Dendritic cell treated with granulocyte-macrophage colony-stimulating factor and Interleukin-4, amounts not matched to agents 40 ng/mL and 50 ng/mL, for 4 days (primary cell): ENCODE measurements at regions of chr12 and their contacts with region 1.

Region 1: DNA sequence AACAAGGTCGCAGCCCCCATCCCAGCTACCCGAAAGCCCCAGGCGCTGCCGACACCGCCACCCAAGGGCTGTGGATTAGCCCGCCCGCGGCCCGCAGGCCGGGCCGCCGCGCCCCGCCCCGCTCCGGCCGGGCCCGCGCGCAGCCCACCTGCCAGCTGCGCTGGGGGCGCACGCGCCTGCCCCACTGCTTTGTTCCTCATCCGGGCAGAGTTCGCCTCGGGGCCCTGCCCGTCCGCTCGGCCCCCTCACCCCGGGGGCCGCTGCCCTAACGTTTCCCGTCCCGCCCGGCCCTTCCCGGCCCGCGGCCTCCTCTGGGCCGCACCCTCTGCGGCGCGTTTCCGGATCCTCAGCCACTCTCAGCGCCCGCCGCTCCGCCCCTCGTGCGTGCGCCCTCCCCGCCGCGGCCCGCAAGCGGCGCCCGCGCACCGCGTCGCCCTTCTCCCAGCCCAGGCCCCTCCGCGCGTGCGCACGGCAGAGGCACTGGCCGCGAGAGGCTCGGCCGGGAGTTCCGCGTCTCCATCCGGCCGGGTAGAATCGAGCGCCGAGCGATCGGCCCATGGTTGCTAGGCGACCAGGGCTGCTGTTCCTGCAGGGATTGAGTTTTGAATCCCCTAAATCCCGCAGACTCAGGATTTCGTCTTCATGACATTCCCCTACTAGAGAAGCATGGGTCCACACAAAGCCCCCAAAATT is at the start of gene PRDM4:
- H3K4me3 Mint-ChIP-seq: peak within 1 kb of the TSS; percentile 88
- H3K27ac Mint-ChIP-seq: peak within 1 kb of the TSS; percentile 82
- H3K4me1 Mint-ChIP-seq: peaks cover 26% of the 10 kb centered on the region
- H3K27me3 Mint-ChIP-seq: peaks cover 8% of the 10 kb centered on the region

Region 2: GRCh38 chr12:107655281-107656065 is 105.5 kb before region 1 on chr12:
- intact Hi-C with region 1: no loop called
- H3K4me3 Mint-ChIP-seq: no peak overlapping the region
- H3K27ac Mint-ChIP-seq: no peak overlapping the region
- H3K4me1 Mint-ChIP-seq: peaks cover 10% of the 10 kb centered on the region
- H3K27me3 Mint-ChIP-seq: no peaks in the 10 kb centered on the region

Region 3: GRCh38 chr12:107685360-107686248 is 75.4 kb before region 1 on chr12 and contains the start of gene PWP1:
- intact Hi-C with region 1: loop called (anchors 5 kb)
- H3K4me3 Mint-ChIP-seq: peak within 1 kb of the TSS; percentile 94
- H3K27ac Mint-ChIP-seq: peak within 1 kb of the TSS; percentile 98
- H3K4me1 Mint-ChIP-seq: peaks cover 12% of the 10 kb centered on the region
- H3K27me3 Mint-ChIP-seq: no peaks in the 10 kb centered on the region

Region 4: GRCh38 chr12:107736914-107737313 is 24.0 kb before region 1 on chr12:
- intact Hi-C with region 1: no loop called
- H3K4me3 Mint-ChIP-seq: no peak overlapping the region
- H3K27ac Mint-ChIP-seq: no peak overlapping the region
- H3K4me1 Mint-ChIP-seq: peaks cover 21% of the 10 kb centered on the region
- H3K27me3 Mint-ChIP-seq: no peaks in the 10 kb centered on the region

Region 5: GRCh38 chr12:107779077-107779831 is 18.3 kb after region 1 on chr12:
- intact Hi-C with region 1: loop called (anchors 2 kb)
- H3K4me3 Mint-ChIP-seq: peak overlapping the region; percentile 71
- H3K27ac Mint-ChIP-seq: peak overlapping the region; percentile 93
- H3K4me1 Mint-ChIP-seq: peaks cover 74% of the 10 kb centered on the region
- H3K27me3 Mint-ChIP-seq: peaks cover 24% of the 10 kb centered on the region

Region 6: DNA sequence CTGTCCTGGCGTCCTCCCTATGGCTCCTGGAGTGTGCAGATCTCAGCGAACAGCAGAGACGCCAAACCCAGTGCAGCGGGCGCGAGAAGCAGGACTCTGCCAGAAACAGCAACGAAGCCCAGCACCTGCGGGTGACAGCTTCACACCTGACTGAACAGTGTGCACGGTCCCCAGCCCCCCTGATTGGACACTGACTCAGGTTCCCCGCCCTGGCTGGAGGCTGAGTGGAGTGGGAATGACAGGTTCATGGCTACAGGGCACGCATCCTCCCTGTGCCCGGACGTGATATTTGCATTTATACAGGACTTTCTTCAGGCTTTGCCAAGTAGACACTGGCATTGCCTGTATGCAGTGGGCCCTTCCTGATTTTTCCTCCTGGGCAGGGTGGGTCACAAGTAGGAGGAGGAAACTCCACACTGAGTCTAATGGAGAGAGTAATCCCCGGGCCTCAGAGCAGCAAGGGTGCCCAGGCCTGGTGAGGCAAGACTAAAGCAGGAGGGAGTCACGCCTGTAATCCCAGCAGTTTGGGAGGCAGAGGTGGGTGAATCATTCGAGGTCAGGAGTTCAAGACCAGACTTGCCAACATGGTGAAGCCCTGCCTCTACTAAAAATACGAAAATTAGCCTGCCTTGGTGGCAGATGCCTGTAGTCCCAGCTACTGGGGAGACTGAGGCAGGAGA is 85.2 kb after region 1 on chr12:
- intact Hi-C with region 1: no loop called
- H3K4me3 Mint-ChIP-seq: no peak overlapping the region
- H3K27ac Mint-ChIP-seq: no peak overlapping the region
- H3K4me1 Mint-ChIP-seq: peaks cover 26% of the 10 kb centered on the region
- H3K27me3 Mint-ChIP-seq: peaks cover 69% of the 10 kb centered on the region

Region 7: GRCh38 chr12:107884769-107885694 is 124.1 kb after region 1 on chr12:
- intact Hi-C with region 1: loop called (anchors 1 kb)
- H3K4me3 Mint-ChIP-seq: no peak overlapping the region
- H3K27ac Mint-ChIP-seq: no peak overlapping the region
- H3K4me1 Mint-ChIP-seq: peaks cover 17% of the 10 kb centered on the region
- H3K27me3 Mint-ChIP-seq: peaks cover 9% of the 10 kb centered on the region